GM12878 (cell line): ENCODE measurements at regions of chr7 and their contacts with region 1.

Region 1: GRCh38 chr7:69825113-69825616 is 226.9 kb downstream of the AUTS2 start:
- DNase-seq: no peak
- ATAC-seq: peak; percentile 56
- H3K4me3 ChIP-seq: peak overlapping the region; percentile 68; the same call in 1 of the 2 replicates
- H3K27ac ChIP-seq: peak overlapping the region; percentile 89
- H3K4me1 ChIP-seq: peaks cover 38% of the 10 kb centered on the region
- H3K27me3 ChIP-seq: no peaks in the 10 kb centered on the region
- CTCF ChIP-seq: peak in 1 of 3 experiments; percentile 56; a peak in 2 of 6 replicates
- EP300 ChIP-seq: no peak
- POLR2A ChIP-seq: no peak
- RAD21 ChIP-seq: peak; percentile 69

Region 2: DNA sequence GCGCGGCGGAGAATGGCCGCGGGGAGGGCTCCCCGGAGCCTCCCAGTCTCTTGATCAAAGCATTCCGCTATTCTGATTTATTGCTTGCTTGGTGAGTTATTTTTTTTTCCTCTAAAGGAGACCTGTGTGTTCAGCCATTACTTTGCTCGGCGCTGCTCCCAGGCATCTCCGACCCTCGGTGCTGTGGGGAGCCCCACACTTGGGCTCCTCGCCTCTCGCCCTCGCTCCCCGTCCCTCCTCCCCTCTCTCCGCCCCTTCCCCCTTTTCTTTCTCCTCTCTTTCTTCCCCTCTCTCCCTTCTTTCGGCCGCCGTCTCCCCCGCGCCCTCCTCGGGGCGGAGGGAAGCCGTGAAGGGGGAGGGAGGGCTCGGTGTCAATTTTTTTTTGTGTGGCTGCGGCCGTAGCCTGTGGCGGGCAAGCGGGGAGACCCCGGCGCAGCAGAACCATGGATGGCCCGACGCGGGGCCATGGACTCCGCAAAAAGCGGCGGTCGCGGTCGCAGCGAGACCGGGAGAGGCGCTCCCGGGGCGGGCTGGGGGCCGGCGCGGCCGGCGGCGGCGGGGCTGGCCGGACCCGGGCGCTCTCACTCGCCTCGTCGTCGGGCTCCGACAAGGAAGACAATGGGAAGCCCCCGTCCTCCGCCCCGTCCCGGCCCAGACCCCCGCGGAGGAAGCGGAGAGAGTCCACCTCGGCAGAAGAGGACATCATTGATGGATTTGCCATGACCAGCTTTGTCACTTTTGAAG is 225.8 kb before region 1 on chr7:
- CTCF ChIA-PET with region 1: interaction called, 4 read pairs
- POLR2A ChIA-PET with region 1: interaction called, 5 read pairs
- RAD21 ChIA-PET with region 1: interaction called, 7 read pairs
- SMC1A ChIA-PET with region 1: interaction called, 6 read pairs
- in situ Hi-C with region 1: no loop called
- intact Hi-C with region 1: loop called (anchors 5 kb)
- DNase-seq: no peak
- ATAC-seq: peak; percentile 1; the same call in 1 of the 3 replicates
- H3K4me3 ChIP-seq: peak overlapping the region; percentile 97
- H3K27ac ChIP-seq: peak overlapping the region; percentile 29; the same call in 1 of the 2 replicates
- H3K4me1 ChIP-seq: peaks cover 18% of the 10 kb centered on the region
- H3K27me3 ChIP-seq: no peaks in the 10 kb centered on the region; a peak in 1 of 4 replicates
- CTCF ChIP-seq: no peak
- EP300 ChIP-seq: no peak
- POLR2A ChIP-seq: no peak; the same call in 1 of the 2 replicates
- RAD21 ChIP-seq: no peak

Region 3: GRCh38 chr7:69757981-69758430 is 67.2 kb before region 1 on chr7:
- CTCF ChIA-PET with region 1: interaction called, 4 read pairs
- POLR2A ChIA-PET with region 1: interaction called, 6 read pairs
- RAD21 ChIA-PET with region 1: interaction called, 11 read pairs
- SMC1A ChIA-PET with region 1: interaction called, 36 read pairs
- in situ Hi-C with region 1: no loop called
- intact Hi-C with region 1: no loop called
- DNase-seq: no peak
- ATAC-seq: peak; percentile 76
- H3K4me3 ChIP-seq: no peak overlapping the region
- H3K27ac ChIP-seq: no peak overlapping the region
- H3K4me1 ChIP-seq: peaks cover under 1% of the 10 kb centered on the region
- H3K27me3 ChIP-seq: no peaks in the 10 kb centered on the region
- CTCF ChIP-seq: no peak
- EP300 ChIP-seq: 0 out of 4 replicates have a peak, but pooled peaks of 1 of the 2 experiments have one; percentile 25
- POLR2A ChIP-seq: no peak
- RAD21 ChIP-seq: no peak

Region 4: DNA sequence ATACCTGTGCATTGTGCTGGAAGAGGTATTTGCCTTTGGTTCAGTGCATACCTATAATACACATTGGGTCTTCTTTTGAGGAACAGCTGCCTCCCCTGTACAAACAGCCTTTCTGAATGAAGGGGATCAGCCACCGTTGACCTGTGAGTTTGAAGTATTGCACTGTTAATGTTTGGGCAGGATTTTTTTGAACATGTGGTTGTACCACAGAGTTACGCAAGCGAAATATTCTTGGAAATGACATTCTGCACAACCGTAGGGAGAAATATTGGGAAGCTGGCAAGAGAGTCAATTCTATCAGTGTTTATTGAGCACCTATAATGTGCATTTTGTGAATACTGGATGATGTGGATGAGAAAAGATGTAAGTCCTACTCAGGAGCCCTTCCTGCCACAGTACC is 43.8 kb after region 1 on chr7:
- CTCF ChIA-PET with region 1: no interaction called
- POLR2A ChIA-PET with region 1: no interaction called
- RAD21 ChIA-PET with region 1: interaction called, 4 read pairs
- SMC1A ChIA-PET with region 1: interaction called, 15 read pairs
- in situ Hi-C with region 1: no loop called
- intact Hi-C with region 1: no loop called
- DNase-seq: no peak
- ATAC-seq: no peak
- H3K4me3 ChIP-seq: no peak overlapping the region
- H3K27ac ChIP-seq: no peak overlapping the region
- H3K4me1 ChIP-seq: peaks cover 11% of the 10 kb centered on the region; the same call in 1 of the 2 replicates
- H3K27me3 ChIP-seq: no peaks in the 10 kb centered on the region
- CTCF ChIP-seq: no peak
- EP300 ChIP-seq: no peak
- POLR2A ChIP-seq: no peak
- RAD21 ChIP-seq: no peak

Region 5: GRCh38 chr7:69906283-69906995 is 81.3 kb after region 1 on chr7:
- CTCF ChIA-PET with region 1: interaction called, 3 read pairs
- POLR2A ChIA-PET with region 1: no interaction called
- RAD21 ChIA-PET with region 1: interaction called, 15 read pairs
- SMC1A ChIA-PET with region 1: interaction called, 10 read pairs
- in situ Hi-C with region 1: no loop called
- intact Hi-C with region 1: no loop called
- DNase-seq: peak; percentile 97
- ATAC-seq: peak; percentile 90
- H3K4me3 ChIP-seq: no peak overlapping the region
- H3K27ac ChIP-seq: peak overlapping the region; percentile 88
- H3K4me1 ChIP-seq: peaks cover 22% of the 10 kb centered on the region
- H3K27me3 ChIP-seq: no peaks in the 10 kb centered on the region
- CTCF ChIP-seq: no peak
- EP300 ChIP-seq: peak; percentile 94 to 96
- POLR2A ChIP-seq: no peak
- RAD21 ChIP-seq: no peak

Region 6: GRCh38 chr7:70434376-70434775 is 609.2 kb after region 1 on chr7:
- CTCF ChIA-PET with region 1: no interaction called
- POLR2A ChIA-PET with region 1: no interaction called
- RAD21 ChIA-PET with region 1: no interaction called
- SMC1A ChIA-PET with region 1: no interaction called
- in situ Hi-C with region 1: no loop called
- intact Hi-C with region 1: no loop called
- DNase-seq: no peak
- ATAC-seq: no peak; the same call in 2 of the 3 replicates
- H3K4me3 ChIP-seq: no peak overlapping the region
- H3K27ac ChIP-seq: no peak overlapping the region
- H3K4me1 ChIP-seq: no peaks in the 10 kb centered on the region
- H3K27me3 ChIP-seq: no peaks in the 10 kb centered on the region
- CTCF ChIP-seq: peak in 2 of 3 experiments; percentile 20 to 24; a peak in 2 of 6 replicates
- EP300 ChIP-seq: no peak
- POLR2A ChIP-seq: no peak
- RAD21 ChIP-seq: no peak

Region 7: DNA sequence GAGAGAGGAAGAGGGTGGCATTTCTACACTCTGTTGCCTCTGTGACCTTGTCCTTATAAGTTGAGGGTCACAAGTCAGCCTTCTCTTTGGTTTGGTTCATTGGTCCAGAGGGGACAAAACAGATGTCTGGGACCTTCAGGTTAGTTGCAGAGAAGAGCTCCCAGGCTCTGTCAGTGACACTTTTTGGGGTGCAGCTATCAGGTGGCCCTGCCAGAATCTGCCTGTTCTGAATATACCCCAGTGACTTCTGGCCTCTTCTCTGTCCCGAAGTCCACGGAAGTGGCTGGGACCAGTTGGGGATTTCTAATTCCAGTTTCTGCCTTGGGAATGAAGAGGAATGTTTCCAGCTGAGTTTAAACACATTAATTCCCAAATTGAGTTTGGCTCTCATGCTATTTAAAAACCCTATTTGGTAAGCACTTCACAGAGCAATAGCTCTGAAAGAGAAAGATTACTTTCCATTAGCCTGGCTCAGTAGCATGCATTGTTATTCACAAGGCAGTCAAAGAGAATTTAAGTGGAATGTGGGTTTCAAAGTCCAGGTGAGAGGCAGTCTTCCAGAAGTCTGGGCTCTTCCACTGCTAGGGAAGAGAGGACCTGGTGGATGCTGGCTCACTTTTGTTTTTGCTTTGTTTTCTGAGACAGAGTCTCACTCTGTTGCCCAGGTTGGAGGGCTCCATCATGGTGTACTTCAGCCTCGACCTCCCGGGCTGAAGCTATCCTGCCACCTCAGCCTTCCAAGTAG is 1069.0 kb after region 1 on chr7:
- CTCF ChIA-PET with region 1: no interaction called
- POLR2A ChIA-PET with region 1: no interaction called
- RAD21 ChIA-PET with region 1: no interaction called
- SMC1A ChIA-PET with region 1: no interaction called
- in situ Hi-C with region 1: no loop called
- intact Hi-C with region 1: no loop called
- DNase-seq: no peak
- ATAC-seq: no peak
- H3K4me3 ChIP-seq: no peak overlapping the region
- H3K27ac ChIP-seq: no peak overlapping the region
- H3K4me1 ChIP-seq: no peaks in the 10 kb centered on the region
- H3K27me3 ChIP-seq: no peaks in the 10 kb centered on the region
- CTCF ChIP-seq: no peak
- EP300 ChIP-seq: no peak
- POLR2A ChIP-seq: no peak
- RAD21 ChIP-seq: no peak